Activated naive CD8-positive, alpha-beta T cell treated with anti-CD3 and anti-CD28 coated beads, Interleukin-2, amount 10 ng/mL, durations not matched to agents 7 days and 5 days (primary cell): ENCODE measurements at regions of chr22 and their contacts with region 1.

Region 1: DNA sequence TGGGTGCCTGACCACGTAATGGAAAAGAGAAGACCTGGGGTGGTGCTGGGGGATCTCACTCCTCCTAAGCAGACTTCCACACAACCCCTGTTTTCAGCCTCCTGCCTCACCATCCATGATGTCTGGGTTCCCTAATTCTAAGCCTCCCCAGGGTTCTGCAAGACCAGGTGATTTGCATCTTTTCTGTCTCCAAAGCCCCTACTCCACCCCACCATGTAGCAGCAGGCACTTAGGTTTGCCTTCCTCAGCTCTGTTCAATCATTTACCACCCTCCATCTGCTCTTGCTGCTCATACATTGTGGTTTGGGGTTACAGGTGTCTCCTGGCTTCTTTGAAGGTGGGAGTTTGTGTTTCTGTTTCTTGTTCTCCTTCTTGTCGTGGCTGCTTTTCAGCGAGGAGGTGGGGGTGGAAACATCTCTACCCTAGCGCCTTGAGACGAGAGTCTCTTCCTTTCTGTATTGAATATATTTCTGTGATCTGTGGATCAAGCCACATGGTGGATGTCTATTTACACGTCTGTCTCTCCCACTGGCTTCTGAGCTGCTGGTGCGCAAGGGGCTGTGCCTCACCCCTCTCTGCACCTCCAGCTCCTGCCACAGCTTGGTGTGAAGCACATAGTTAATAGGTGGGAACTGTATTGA is 6.6 kb upstream of the SSTR3 start:
- DNase-seq: peak; percentile 64
- ATAC-seq: peak; percentile 70
- H3K4me3 Mint-ChIP-seq: peak overlapping the region; percentile 92
- H3K27ac Mint-ChIP-seq: peak overlapping the region; percentile 93
- H3K4me1 Mint-ChIP-seq: peaks cover 68% of the 10 kb centered on the region
- H3K27me3 Mint-ChIP-seq: no peaks in the 10 kb centered on the region

Region 2: GRCh38 chr22:37077884-37078485 is 140.9 kb before region 1 on chr22:
- POLR2A ChIA-PET with region 1: interaction called, 12 read pairs
- DNase-seq: peak; percentile 94
- ATAC-seq: peak; percentile 17
- H3K4me3 Mint-ChIP-seq: peak overlapping the region; percentile 85
- H3K27ac Mint-ChIP-seq: peak overlapping the region; percentile 100
- H3K4me1 Mint-ChIP-seq: peaks cover 47% of the 10 kb centered on the region
- H3K27me3 Mint-ChIP-seq: no peaks in the 10 kb centered on the region

Region 3: DNA sequence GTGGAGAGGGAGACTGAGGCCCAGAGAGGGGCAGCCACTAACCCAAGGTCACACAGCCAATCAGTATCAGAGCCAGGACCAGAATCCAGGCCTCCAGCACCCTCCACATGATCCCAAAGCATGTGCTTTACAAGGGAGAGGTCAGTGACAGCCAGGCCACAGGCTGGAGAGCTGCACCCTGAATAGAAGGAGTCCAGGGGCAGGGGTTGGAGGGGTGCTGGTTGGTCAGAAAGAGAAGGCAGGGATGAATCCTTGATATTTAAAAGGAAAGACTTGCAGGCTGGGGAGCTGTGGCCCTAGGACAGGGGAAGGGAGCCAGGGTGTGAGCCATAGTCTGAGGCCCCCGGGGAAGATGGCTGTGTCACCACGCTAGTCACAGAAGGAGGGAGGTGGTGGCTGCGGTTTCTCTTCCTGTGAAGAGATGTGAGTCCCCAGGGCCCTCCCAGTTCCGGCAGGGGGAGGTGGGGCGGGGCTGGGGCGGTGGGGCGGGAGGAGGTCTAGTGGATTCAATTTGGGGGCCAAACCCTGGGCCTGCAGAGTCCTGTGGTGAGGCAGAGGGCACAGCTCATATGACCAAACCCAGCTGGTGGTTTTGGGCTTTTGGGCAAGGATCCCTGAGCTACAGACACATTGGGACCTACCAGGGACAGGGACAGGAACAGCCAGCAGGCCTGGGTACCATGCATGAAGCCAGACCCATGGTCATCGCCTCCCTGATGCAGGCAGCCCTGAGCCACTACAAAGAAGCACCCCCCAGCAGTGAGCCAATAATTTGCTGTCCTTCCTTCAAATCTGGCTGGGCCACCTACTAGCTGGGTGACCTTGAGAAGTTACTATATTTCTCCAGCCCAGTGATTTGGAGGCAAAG is 11.1 kb after region 1 on chr22:
- POLR2A ChIA-PET with region 1: interaction called, 85 read pairs
- DNase-seq: peak; percentile 84
- ATAC-seq: peak; percentile 59
- H3K4me3 Mint-ChIP-seq: peak overlapping the region; percentile 84
- H3K27ac Mint-ChIP-seq: peak overlapping the region; percentile 99
- H3K4me1 Mint-ChIP-seq: peaks cover 85% of the 10 kb centered on the region
- H3K27me3 Mint-ChIP-seq: no peaks in the 10 kb centered on the region

Region 4: DNA sequence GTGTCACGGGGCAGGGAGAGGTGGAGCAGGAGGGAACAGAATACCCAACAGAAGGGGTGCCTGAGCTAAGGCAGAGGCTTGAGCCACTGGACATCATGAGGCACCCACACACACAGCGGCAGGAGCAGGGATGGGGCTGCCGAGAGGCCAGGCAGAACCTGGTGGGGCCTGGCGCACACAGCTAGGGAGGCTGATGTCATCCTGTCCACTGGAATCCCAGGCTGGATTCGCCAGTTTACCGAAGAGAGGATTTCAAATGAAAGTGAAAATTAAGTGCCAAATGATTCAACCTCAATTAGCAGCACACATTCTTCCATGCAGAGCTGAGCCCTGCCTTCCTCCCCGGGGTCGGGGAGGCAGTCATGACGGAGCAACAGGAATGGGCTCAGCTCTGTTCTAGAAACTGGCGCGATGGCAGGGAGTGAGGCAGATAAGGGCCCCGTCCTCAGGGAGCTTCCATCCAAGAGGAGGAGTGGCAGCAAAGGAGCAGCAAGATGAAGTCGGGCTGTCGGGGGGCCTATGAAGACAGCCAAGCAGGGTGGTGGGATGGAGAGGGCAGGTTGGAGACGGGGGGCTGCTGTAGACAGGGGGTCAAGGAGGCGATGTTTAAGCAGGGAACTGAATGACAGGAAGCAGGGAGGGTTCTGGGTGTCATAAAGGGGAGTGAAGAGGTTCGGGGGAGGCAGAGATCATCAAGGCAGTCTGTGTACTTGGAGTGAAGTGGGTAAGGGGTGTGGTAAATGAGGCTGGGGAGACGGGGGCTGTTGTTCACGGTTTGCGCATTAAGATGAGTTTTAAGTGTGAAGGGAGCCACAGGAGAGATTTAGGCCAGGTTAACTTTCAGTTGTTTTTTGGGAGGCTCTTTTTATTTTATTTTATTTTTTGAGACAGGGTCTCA is 18.7 kb after region 1 on chr22:
- POLR2A ChIA-PET with region 1: interaction called, 327 read pairs
- DNase-seq: no peak
- ATAC-seq: no peak
- H3K4me3 Mint-ChIP-seq: peak overlapping the region; percentile 100
- H3K27ac Mint-ChIP-seq: peak overlapping the region; percentile 100
- H3K4me1 Mint-ChIP-seq: peaks cover 84% of the 10 kb centered on the region
- H3K27me3 Mint-ChIP-seq: no peaks in the 10 kb centered on the region